ENCODE measurements at regions of chr11 and their contacts with region 1.

Region 1: GRCh38 chr11:126790550-126791081 is 210.0 kb downstream of the KIRREL3 start:
- DNase-seq: no peak
- H3K4me3 ChIP-seq: no peak overlapping the region
- H3K27ac ChIP-seq: no peak overlapping the region
- H3K4me1 ChIP-seq: no peaks in the 10 kb centered on the region
- H3K27me3 ChIP-seq: no peaks in the 10 kb centered on the region
- CTCF ChIP-seq: no peak
- POLR2A ChIP-seq: no peak

Region 2: GRCh38 chr11:126739499-126740145 is 51.0 kb before region 1 on chr11:
- intact Hi-C with region 1: loop called (anchors 2 kb)
- DNase-seq: no peak
- H3K4me3 ChIP-seq: no peak overlapping the region
- H3K27ac ChIP-seq: no peak overlapping the region
- H3K4me1 ChIP-seq: no peaks in the 10 kb centered on the region
- H3K27me3 ChIP-seq: no peaks in the 10 kb centered on the region
- CTCF ChIP-seq: no peak
- POLR2A ChIP-seq: no peak

Region 3: DNA sequence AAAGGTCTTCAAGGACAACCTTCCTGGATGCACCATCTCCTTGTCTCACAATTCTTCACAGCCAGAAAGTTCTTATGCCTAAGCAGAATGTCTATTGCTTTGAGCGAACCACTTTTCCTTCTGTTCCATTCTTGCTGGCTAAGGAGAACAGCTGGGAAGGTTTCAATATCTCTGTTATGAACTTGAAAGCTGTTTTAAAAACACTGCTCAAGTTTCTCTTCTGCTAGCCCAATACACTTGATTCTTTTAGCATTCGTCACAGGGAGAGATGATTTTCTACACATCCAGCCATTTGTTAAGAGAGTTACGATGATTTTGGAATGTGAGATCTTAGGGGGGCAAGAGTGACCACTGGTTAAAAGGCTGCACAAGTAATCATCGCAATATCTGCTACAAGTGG is 39.4 kb before region 1 on chr11:
- intact Hi-C with region 1: no loop called
- DNase-seq: no peak
- H3K4me3 ChIP-seq: no peak overlapping the region
- H3K27ac ChIP-seq: no peak overlapping the region
- H3K4me1 ChIP-seq: no peaks in the 10 kb centered on the region
- H3K27me3 ChIP-seq: no peaks in the 10 kb centered on the region
- CTCF ChIP-seq: no peak
- POLR2A ChIP-seq: no peak